CD8-positive, alpha-beta T cell (primary cell): ENCODE measurements at regions of chr3 and their contacts with region 1.

Region 1: DNA sequence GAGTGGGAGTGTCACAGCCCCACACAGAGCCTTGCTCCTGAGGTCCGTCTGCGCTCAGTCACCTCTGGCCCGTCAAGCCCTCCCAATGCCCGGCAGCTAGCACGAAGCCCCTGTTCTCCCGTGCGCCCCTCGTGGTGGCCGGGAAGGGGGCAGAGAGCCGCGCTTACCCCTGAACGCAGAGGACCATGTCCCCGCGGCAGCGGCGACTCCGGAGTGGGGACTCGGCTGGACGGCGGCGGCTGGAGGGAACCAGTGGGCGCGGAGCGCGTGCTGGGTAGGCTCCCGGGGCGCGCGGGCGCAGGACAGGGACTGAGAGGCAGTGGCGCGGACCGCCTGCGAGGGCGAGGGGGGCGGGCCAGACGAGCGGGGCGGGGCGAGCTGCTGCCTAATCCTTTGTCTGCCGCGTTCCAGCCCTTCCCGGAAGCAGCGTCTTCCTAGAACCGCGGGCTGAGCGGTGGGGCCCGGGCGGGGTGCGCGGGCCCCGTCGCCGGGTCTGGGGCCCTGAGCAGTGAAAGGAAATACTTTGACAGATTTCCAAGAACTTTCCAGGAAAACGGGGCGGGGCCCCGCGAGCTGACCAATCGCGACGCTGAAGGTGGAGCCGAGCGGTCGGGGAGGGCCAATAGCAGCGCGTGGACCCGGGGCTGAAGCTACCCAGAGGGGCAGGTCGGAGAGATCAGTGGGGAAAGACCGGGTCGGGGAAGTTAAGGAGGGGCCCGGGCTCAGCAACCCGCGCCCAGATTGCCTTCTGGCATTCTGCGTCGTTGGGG is at the start of gene CISH:
- DNase-seq: peak; percentile 75 to 94 (median 90)
- ATAC-seq: peak; percentile 64
- H3K4me3 ChIP-seq: peak within 1 kb of the TSS; percentile 89 to 95
- H3K4me3 Mint-ChIP-seq: peak within 1 kb of the TSS; percentile 97
- H3K27ac ChIP-seq: peak within 1 kb of the TSS; percentile 57 to 87
- H3K27ac Mint-ChIP-seq: peak within 1 kb of the TSS; percentile 92
- H3K4me1 ChIP-seq: peaks cover 58% of the 10 kb centered on the region
- H3K4me1 Mint-ChIP-seq: peaks cover 67% of the 10 kb centered on the region
- H3K27me3 ChIP-seq: no peaks in the 10 kb centered on the region
- H3K27me3 Mint-ChIP-seq: no peaks in the 10 kb centered on the region
- CTCF ChIP-seq: no peak
- total RNA-seq, gene CISH: 4.7 to 5.6 TPM

Region 2: DNA sequence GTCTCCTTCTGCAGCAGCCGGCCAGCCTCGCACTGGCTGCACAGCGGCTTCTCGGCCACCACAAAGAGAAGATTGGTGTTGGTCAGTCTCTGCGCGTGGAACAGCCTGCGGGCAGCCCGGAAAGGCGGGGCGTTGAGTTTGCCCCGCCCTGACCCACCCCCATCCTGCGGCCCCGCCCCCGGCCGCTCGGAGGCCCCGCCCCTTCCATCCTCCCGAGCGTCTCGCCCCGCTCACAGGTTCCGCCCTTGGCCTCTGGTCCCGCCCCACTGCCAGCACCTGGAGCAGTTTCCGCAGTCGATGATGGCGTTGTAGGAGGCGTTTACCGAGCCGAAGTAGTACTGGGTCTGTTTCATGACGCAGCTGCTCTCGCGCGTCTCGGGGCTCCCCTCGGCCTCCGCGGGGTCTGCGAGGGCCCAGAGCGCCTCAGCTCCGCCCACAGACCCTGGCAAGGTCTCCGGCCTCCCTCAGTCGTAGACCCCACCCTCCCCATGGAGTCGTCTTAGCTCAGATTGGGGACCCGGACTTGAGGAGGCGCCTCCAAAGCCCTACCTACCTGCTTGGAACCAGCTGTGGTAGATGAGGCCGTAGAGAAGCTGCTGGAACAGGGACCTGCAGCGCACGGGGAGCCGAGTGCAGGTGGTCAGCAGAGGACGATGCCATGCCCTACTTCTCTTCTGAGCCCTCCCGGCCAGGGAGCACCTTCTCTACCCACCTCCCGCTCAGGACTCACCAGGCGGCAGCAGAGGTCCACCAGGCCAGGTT is 246.4 kb before region 1 on chr3:
- CTCF ChIA-PET with region 1: interaction called, 3 read pairs
- POLR2A ChIA-PET with region 1: no interaction called
- intact Hi-C with region 1: loop called (anchors 1 to 2 kb)
- DNase-seq: peak; percentile 89 to 98 (median 94)
- ATAC-seq: peak; percentile 95
- H3K4me3 ChIP-seq: peak overlapping the region; percentile 68 to 81
- H3K4me3 Mint-ChIP-seq: peak overlapping the region; percentile 87
- H3K27ac ChIP-seq: peak overlapping the region; percentile 91 to 92
- H3K27ac Mint-ChIP-seq: peak overlapping the region; percentile 95
- H3K4me1 ChIP-seq: peaks cover 20% of the 10 kb centered on the region
- H3K4me1 Mint-ChIP-seq: peaks cover 35% of the 10 kb centered on the region
- H3K27me3 ChIP-seq: no peaks in the 10 kb centered on the region
- H3K27me3 Mint-ChIP-seq: no peaks in the 10 kb centered on the region
- CTCF ChIP-seq: no peak

Region 3: GRCh38 chr3:50550079-50550741 is 61.4 kb before region 1 on chr3:
- CTCF ChIA-PET with region 1: interaction called, 35 read pairs
- POLR2A ChIA-PET with region 1: no interaction called
- intact Hi-C with region 1: no loop called
- DNase-seq: peak; percentile 43 to 75 (median 71)
- ATAC-seq: peak; percentile 89
- H3K4me3 ChIP-seq: no peak overlapping the region
- H3K4me3 Mint-ChIP-seq: no peak overlapping the region
- H3K27ac ChIP-seq: no peak overlapping the region
- H3K27ac Mint-ChIP-seq: no peak overlapping the region
- H3K4me1 ChIP-seq: no peaks in the 10 kb centered on the region
- H3K4me1 Mint-ChIP-seq: no peaks in the 10 kb centered on the region
- H3K27me3 ChIP-seq: no peaks in the 10 kb centered on the region
- H3K27me3 Mint-ChIP-seq: no peaks in the 10 kb centered on the region
- CTCF ChIP-seq: peak; percentile 82

Region 4: DNA sequence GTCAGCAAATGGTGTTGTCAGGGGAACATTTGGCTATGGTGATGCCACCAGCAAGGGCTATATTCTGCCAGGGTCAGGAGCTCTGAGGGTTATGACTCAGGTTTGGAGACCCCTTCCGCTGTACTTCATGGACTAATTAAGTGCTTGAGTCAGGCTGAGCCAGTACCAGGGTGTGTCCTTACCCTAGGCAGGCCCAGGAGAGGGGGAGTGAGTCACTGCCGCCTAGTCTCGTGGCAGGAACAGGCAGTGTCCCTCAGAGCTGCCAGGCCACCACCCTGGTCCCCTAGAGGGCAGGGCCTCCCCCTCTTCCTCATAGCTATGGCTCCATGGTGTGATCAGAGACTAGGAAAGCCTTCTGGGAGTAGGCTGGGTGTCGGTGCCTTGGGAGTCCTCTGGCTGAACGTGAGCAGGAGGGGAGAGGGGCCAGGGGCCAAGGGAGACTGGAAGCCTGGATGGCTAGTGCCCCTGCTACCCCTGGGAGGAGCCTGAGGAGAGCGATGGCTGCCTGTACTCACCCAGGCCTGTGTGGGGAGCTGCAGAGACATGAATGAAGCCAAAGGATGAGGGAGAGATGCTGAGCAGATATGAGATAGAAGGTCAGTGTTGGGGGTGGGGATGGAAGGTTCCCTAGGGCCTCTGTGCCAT is 15.9 kb after region 1 on chr3:
- CTCF ChIA-PET with region 1: interaction called, 132 read pairs
- POLR2A ChIA-PET with region 1: no interaction called
- intact Hi-C with region 1: loop called in 1 of 2 experiments (anchors 2 kb)
- DNase-seq: peak in 1 of 9 experiments; percentile 38
- ATAC-seq: no peak
- H3K4me3 ChIP-seq: no peak overlapping the region
- H3K4me3 Mint-ChIP-seq: no peak overlapping the region
- H3K27ac ChIP-seq: no peak overlapping the region
- H3K27ac Mint-ChIP-seq: no peak overlapping the region
- H3K4me1 ChIP-seq: peaks cover 92% of the 10 kb centered on the region
- H3K4me1 Mint-ChIP-seq: peaks cover 87% of the 10 kb centered on the region
- H3K27me3 ChIP-seq: no peaks in the 10 kb centered on the region
- H3K27me3 Mint-ChIP-seq: no peaks in the 10 kb centered on the region
- CTCF ChIP-seq: no peak

Region 5: DNA sequence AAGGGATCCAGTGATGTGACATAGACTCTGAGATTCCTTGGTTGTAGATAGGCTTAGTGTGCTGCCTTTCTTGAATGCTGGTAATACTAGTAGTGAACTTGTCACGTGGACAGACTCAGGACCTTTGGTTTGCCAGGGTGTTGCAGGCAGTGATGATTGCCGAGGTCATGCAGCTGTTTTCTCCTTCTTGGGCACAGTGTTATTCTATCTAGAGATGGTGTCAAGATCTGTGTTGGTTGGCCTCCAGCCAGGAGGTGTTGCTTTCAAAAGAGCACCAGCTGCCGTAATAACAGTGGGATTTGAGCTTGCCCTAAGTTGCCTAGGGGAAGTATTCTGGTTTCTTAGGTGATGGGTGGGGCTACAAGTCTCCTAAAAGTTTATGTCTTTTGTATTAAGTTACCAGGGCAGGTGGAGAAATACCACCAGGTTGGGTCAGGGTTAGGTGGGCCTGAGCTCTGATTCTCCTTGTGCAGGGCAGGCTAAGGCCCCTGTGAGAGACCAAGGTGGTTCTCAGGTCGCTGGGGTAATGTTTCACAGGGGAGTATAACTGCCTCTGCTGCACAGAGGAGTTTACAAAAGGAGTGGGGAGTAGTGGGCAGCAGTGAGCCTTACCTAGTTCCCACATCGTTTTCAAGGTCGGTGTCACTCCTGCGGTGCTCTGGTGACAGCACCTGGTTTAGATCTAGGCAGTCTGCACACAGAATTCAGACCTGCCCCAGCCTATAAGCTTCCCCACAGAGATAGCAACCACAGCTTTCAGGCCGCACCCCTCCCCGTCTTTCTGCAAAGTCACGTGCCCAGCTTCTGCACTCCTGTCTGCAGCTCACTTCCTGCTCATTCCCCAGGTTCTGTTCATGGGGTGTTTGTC is 413.4 kb after region 1 on chr3:
- CTCF ChIA-PET with region 1: interaction called, 13 read pairs
- POLR2A ChIA-PET with region 1: no interaction called
- intact Hi-C with region 1: loop called (anchors 1 to 5 kb)
- DNase-seq: peak; percentile 59 to 94 (median 78)
- ATAC-seq: peak; percentile 92
- H3K4me3 ChIP-seq: peak overlapping the region; percentile 36 to 38
- H3K4me3 Mint-ChIP-seq: peak overlapping the region; percentile 72
- H3K27ac ChIP-seq: peak overlapping the region; percentile 69 to 83
- H3K27ac Mint-ChIP-seq: peak overlapping the region; percentile 93
- H3K4me1 ChIP-seq: peaks cover 44% of the 10 kb centered on the region
- H3K4me1 Mint-ChIP-seq: peaks cover 61% of the 10 kb centered on the region
- H3K27me3 ChIP-seq: no peaks in the 10 kb centered on the region
- H3K27me3 Mint-ChIP-seq: no peaks in the 10 kb centered on the region
- CTCF ChIP-seq: no peak

Region 6: DNA sequence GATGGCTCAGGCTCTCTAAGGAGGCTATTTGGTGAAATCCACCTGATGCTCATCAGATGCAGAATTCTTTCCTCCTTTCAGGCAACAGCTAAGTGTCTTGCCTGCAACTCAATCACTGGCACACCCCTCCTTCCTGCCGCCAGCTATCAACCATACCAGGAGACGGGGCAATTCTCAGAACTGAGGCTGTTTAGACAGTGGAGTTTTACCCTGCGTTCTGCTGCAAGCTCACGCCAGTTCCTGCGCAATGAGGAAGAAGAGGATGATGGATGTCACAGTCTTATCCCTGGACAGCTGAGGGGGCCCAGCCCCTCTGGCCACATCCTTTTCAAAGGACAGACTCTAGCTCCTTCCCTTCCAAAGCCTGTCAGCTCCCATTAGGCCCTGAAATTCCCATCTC is 766.4 kb after region 1 on chr3:
- CTCF ChIA-PET with region 1: interaction called, 38 read pairs
- POLR2A ChIA-PET with region 1: no interaction called
- intact Hi-C with region 1: no loop called
- DNase-seq: no peak
- ATAC-seq: no peak
- H3K4me3 ChIP-seq: no peak overlapping the region
- H3K4me3 Mint-ChIP-seq: no peak overlapping the region
- H3K27ac ChIP-seq: no peak overlapping the region
- H3K27ac Mint-ChIP-seq: no peak overlapping the region
- H3K4me1 ChIP-seq: peaks cover 12% of the 10 kb centered on the region
- H3K4me1 Mint-ChIP-seq: peaks cover 10% of the 10 kb centered on the region
- H3K27me3 ChIP-seq: no peaks in the 10 kb centered on the region
- H3K27me3 Mint-ChIP-seq: no peaks in the 10 kb centered on the region
- CTCF ChIP-seq: no peak

Region 7: DNA sequence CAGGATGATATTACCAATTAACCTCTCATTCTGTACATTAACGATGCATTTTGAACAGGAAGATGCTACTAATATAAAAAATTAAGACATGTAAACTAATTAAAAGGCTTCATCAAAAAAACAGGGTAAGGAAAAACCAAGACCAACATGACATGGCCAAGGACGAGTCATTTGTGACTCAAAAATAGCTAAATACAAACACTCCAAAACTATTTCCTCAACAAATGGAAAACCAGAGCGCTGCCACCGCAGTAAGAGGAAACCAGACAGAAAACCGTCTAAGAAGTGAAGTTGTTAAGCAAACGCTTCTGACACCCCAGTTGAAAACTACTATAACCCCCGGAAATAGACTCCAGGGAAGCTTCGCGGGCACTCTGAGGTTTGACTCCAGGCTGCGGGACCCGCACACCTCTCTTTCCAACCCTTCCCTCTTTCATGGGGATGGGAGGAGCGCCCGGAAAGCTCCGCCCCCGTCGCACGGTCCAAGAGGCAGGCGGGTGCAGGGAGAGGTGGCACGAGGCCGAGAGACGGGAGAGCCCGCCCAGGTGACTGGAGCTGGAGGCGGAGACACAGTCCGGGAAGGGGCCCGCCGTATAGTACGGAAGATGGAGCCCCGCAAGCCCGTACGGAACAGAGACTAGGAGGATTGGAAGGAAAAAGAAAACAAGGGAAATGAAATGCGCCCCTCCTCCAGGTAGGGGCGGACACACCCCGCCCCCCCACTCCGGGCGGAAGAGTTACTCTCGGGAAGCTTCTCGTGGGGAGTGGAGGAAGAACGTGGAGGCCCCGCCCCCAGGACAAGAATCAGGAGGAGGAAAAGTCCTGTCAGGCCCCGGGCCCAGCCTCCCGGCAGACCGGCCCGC is 887.5 kb after region 1 on chr3:
- CTCF ChIA-PET with region 1: interaction called, 3 read pairs
- POLR2A ChIA-PET with region 1: no interaction called
- intact Hi-C with region 1: loop called (anchors 1 to 2 kb)
- DNase-seq: peak; percentile 44 to 88 (median 77)
- ATAC-seq: peak; percentile 46
- H3K4me3 ChIP-seq: peak overlapping the region; percentile 86 to 87
- H3K4me3 Mint-ChIP-seq: peak overlapping the region; percentile 92
- H3K27ac ChIP-seq: peak overlapping the region; percentile 80 to 93
- H3K27ac Mint-ChIP-seq: peak overlapping the region; percentile 99
- H3K4me1 ChIP-seq: peaks cover 16% of the 10 kb centered on the region
- H3K4me1 Mint-ChIP-seq: peaks cover 24% of the 10 kb centered on the region
- H3K27me3 ChIP-seq: no peaks in the 10 kb centered on the region
- H3K27me3 Mint-ChIP-seq: no peaks in the 10 kb centered on the region
- CTCF ChIP-seq: no peak